ENCODE measurements at regions of chrX and their contacts with region 1.

Region 1: GRCh38 chrX:153032397-153033118 is 23.7 kb upstream of the PNMA3 start:
- DNase-seq: peak; percentile 74
- H3K4me3 ChIP-seq: peak overlapping the region; percentile 70
- H3K27ac ChIP-seq: no peak overlapping the region
- H3K4me1 ChIP-seq: no peaks in the 10 kb centered on the region
- H3K27me3 ChIP-seq: no peaks in the 10 kb centered on the region

Region 2: DNA sequence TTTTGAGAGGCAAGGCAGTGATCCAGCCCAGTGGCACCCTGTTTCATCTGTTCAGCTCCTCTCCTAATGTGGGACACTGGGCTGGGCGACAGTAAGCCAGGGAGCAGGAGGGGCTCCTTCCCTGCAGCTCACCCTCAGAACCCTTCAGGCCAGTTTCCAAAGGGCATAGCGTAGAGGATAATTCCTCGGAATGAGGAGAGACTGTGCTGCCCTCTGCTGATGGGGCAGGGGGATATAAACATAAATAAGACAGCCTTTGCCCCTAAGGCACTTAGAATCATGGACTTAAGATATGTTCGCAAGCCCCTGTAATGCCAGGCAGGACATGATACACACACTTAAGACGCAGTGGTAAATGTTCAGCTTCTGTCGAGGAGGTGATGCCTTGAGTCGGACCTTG is 162.6 kb before region 1 on chrX:
- in situ Hi-C with region 1: no loop called
- DNase-seq: no peak
- H3K4me3 ChIP-seq: no peak overlapping the region
- H3K27ac ChIP-seq: no peak overlapping the region
- H3K4me1 ChIP-seq: no peaks in the 10 kb centered on the region
- H3K27me3 ChIP-seq: no peaks in the 10 kb centered on the region

Region 3: GRCh38 chrX:152926923-152927322 is 105.6 kb before region 1 on chrX:
- in situ Hi-C with region 1: no loop called
- DNase-seq: peak; percentile 9
- H3K4me3 ChIP-seq: no peak overlapping the region
- H3K27ac ChIP-seq: no peak overlapping the region
- H3K4me1 ChIP-seq: no peaks in the 10 kb centered on the region
- H3K27me3 ChIP-seq: no peaks in the 10 kb centered on the region

Region 4: GRCh38 chrX:153438531-153438930 is 406.0 kb after region 1 on chrX:
- in situ Hi-C with region 1: loop called (anchors 25 kb)
- DNase-seq: peak; percentile 49
- H3K4me3 ChIP-seq: no peak overlapping the region
- H3K27ac ChIP-seq: no peak overlapping the region
- H3K4me1 ChIP-seq: no peaks in the 10 kb centered on the region
- H3K27me3 ChIP-seq: no peaks in the 10 kb centered on the region